ENCODE measurements at regions of chr1 and their contacts with region 1.

Region 1: DNA sequence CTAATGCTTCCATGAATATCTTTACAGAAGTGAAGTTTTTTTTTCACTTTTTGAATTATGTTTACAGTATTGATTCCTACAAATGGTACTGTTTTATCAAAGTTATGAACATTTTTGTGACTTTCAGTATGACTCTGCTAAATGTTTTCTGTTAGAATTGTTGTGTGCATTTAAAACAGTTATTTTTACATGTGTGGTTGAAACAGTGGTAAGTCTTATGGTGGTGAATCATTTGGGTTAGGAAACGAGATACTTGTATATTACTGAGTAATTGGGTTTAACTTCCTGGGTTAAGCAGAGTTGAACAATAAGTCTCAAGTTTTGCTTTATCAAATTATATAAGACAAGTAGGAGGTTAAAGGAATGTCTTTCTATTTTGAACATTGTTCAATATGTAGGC is 66.8 kb downstream of the VPS13D start:
- DNase-seq: no peak
- H3K4me3 ChIP-seq: no peak overlapping the region
- H3K27ac ChIP-seq: no peak overlapping the region
- H3K4me1 ChIP-seq: no peaks in the 10 kb centered on the region
- H3K27me3 ChIP-seq: no peaks in the 10 kb centered on the region
- CTCF ChIP-seq: no peak
- EP300 ChIP-seq: no peak
- POLR2A ChIP-seq: no peak

Region 2: DNA sequence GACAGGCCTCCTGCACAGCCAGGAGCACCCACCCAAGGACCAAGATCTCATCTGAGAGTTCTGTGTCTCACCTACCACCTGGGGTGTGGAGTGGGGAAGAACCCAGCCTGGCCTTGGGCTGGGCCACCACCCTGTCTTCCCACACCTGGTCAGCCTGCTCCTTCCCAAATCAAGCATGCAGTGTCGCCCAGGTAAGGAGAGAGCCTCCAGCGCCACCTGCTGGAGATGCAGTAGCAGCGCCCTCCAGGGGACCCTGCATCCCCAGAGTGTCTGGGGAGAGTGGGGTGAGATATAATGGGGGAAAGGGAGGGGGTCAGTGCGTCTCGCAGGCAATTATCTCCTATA is 402.7 kb before region 1 on chr1:
- intact Hi-C with region 1: no loop called
- DNase-seq: no peak
- H3K4me3 ChIP-seq: no peak overlapping the region
- H3K27ac ChIP-seq: no peak overlapping the region
- H3K4me1 ChIP-seq: no peaks in the 10 kb centered on the region
- H3K27me3 ChIP-seq: peaks cover 10 to 53% (median 24%) of the 10 kb centered on the region in 3 donors
- CTCF ChIP-seq: peak; percentile 34 to 76 (median 64)
- EP300 ChIP-seq: no peak
- POLR2A ChIP-seq: no peak

Region 3: DNA sequence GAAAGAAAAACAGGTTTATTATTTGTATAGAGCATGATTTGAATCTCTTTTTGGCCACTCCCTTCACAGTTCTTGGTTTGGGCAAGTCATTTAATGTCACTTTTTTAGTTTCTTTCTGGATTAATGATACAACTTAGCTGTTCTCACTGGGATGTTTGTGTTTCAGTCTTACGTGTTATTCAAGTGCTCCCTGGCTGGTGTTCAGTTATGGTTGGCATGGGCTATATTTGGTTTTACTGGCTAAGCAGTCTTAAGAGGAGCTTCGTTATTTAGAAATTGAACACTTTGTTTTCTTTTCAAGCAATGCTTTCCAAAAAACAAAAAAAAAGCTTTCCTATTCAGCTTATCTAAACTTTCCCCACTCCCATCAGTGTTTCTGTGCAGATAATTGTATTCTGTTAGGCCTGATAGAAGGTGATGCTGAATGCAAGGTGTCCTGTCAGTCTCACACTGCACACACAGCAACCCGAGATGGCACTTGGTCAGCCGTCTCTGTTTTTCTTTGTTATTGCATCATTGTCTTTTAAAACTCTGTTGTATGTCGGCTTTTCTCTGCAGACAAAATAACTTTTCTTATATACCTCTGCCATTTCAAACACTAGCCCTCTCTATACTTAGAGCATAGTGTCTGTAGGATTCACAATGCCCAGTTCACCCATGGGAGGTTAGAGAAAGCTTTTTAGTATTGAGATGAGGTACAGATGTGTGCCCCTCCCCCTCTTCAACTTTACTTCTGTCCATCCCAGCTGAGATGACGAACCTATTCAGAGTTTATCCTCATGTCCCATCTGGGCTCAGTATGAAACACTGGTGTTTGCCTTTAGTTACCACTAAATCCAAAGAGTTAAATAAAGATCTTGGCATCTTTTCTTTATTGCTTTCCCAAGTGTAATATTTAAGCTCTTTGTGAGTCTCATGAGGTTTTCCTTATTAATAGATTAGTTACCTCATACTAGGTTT is 13.4 kb after region 1 on chr1:
- intact Hi-C with region 1: loop called (anchors 1 kb)
- DNase-seq: peak; percentile 86
- H3K4me3 ChIP-seq: peak overlapping the region in 1 of 4 donors; percentile 2
- H3K27ac ChIP-seq: peak overlapping the region; percentile 68 to 87 (median 82)
- H3K4me1 ChIP-seq: peaks cover 0 to 25% (median 21%) of the 10 kb centered on the region in 4 donors
- H3K27me3 ChIP-seq: no peaks in the 10 kb centered on the region
- CTCF ChIP-seq: no peak
- EP300 ChIP-seq: peak in 3 of 4 donors; percentile 37 to 60 (median 45)
- POLR2A ChIP-seq: no peak